Psoas muscle (tissue), 8 donors: ENCODE measurements at regions of chr17 and their contacts with region 1.

Region 1: GRCh38 chr17:30278032-30278431 is 13.7 kb downstream of the BLMH start:
- DNase-seq: no peak
- ATAC-seq: peak in 3 of 4 donors; percentile 62 to 83 (median 68)
- H3K4me3 ChIP-seq: no peak overlapping the region
- H3K27ac ChIP-seq: no peak overlapping the region
- H3K4me1 ChIP-seq: no peaks in the 10 kb centered on the region
- H3K27me3 ChIP-seq: no peaks in the 10 kb centered on the region
- CTCF ChIP-seq: peak; percentile 51

Region 2: GRCh38 chr17:30104575-30105339 is 173.3 kb before region 1 on chr17:
- intact Hi-C with region 1: loop called (anchors 2 to 5 kb)
- DNase-seq: peak; percentile 64 to 72
- ATAC-seq: peak; percentile 86 to 98 (median 93)
- H3K4me3 ChIP-seq: peak overlapping the region; percentile 59
- H3K27ac ChIP-seq: no peak overlapping the region
- H3K4me1 ChIP-seq: no peaks in the 10 kb centered on the region
- H3K27me3 ChIP-seq: peaks cover 0 to 3% (median 0%) of the 10 kb centered on the region in 3 donors
- CTCF ChIP-seq: peak; percentile 85

Region 3: GRCh38 chr17:30116661-30117551 is 161.1 kb before region 1 on chr17 and contains the start of gene NSRP1:
- intact Hi-C with region 1: loop called in 1 of 2 experiments (anchors 5 kb)
- DNase-seq: peak; percentile 96 to 97
- ATAC-seq: peak; percentile 98 to 99 (median 98)
- H3K4me3 ChIP-seq: peak within 1 kb of the TSS; percentile 80
- H3K27ac ChIP-seq: peak within 1 kb of the TSS; percentile 96
- H3K4me1 ChIP-seq: peaks cover 21% of the 10 kb centered on the region
- H3K27me3 ChIP-seq: no peaks in the 10 kb centered on the region
- CTCF ChIP-seq: no peak
- total RNA-seq, gene NSRP1: 13.6 to 25.9 (median 21.6) TPM

Region 4: GRCh38 chr17:30134551-30134950 is 143.5 kb before region 1 on chr17:
- intact Hi-C with region 1: loop called in 1 of 2 experiments (anchors 5 kb)
- DNase-seq: no peak
- ATAC-seq: no peak
- H3K4me3 ChIP-seq: no peak overlapping the region
- H3K27ac ChIP-seq: no peak overlapping the region
- H3K4me1 ChIP-seq: peaks cover 4% of the 10 kb centered on the region
- H3K27me3 ChIP-seq: no peaks in the 10 kb centered on the region
- CTCF ChIP-seq: no peak